ENCODE measurements at regions of chr11 and their contacts with region 1.

Region 1: DNA sequence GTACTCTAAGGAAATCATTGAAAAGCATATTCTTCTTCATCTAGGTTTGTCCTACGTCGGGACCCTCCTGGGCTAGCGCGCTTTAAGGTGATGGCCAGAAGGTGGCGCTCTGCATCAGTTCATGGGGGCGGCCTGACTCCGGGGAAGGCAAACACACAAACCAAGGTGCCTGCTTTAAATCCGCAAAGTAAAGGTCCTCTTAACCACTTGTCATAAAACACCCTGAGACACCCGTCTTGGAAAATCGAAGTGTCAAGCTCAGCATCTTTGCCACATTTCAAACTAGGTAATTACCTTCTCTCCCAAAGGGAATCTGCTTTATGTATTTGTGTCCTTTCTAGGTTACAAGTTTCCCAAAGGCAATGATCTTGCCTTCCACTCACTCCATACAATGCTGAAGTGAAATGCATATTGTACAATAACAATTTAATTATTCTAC is 33.9 kb downstream of the LMO2 start:
- DNase-seq: peak; percentile 32
- ATAC-seq: peak; percentile 99
- H3K4me3 ChIP-seq: no peak overlapping the region
- H3K27ac ChIP-seq: no peak overlapping the region
- H3K4me1 ChIP-seq: no peaks in the 10 kb centered on the region
- H3K27me3 ChIP-seq: peaks cover 0 to 2% of the 10 kb centered on the region in 2 experiments; a peak in 1 of 4 replicates
- CTCF ChIP-seq: peak; percentile 85 to 94 (median 88); a peak in 5 of 6 replicates
- EP300 ChIP-seq: no peak
- POLR2A ChIP-seq: no peak
- RAD21 ChIP-seq: peak; percentile 100

Region 2: GRCh38 chr11:33722579-33723225 is 135.2 kb before region 1 on chr11:
- CTCF ChIA-PET with region 1: no interaction called
- POLR2A ChIA-PET with region 1: no interaction called
- RAD21 ChIA-PET with region 1: no interaction called
- SMC1A ChIA-PET with region 1: no interaction called
- in situ Hi-C with region 1: no loop called
- intact Hi-C with region 1: no loop called
- DNase-seq: peak; percentile 34
- ATAC-seq: peak; percentile 90
- H3K4me3 ChIP-seq: no peak overlapping the region
- H3K27ac ChIP-seq: peak overlapping the region; percentile 62
- H3K4me1 ChIP-seq: peaks cover 24% of the 10 kb centered on the region
- H3K27me3 ChIP-seq: no peaks in the 10 kb centered on the region
- CTCF ChIP-seq: no peak
- EP300 ChIP-seq: no peak
- POLR2A ChIP-seq: no peak; the same call in 1 of the 2 replicates
- RAD21 ChIP-seq: no peak

Region 3: DNA sequence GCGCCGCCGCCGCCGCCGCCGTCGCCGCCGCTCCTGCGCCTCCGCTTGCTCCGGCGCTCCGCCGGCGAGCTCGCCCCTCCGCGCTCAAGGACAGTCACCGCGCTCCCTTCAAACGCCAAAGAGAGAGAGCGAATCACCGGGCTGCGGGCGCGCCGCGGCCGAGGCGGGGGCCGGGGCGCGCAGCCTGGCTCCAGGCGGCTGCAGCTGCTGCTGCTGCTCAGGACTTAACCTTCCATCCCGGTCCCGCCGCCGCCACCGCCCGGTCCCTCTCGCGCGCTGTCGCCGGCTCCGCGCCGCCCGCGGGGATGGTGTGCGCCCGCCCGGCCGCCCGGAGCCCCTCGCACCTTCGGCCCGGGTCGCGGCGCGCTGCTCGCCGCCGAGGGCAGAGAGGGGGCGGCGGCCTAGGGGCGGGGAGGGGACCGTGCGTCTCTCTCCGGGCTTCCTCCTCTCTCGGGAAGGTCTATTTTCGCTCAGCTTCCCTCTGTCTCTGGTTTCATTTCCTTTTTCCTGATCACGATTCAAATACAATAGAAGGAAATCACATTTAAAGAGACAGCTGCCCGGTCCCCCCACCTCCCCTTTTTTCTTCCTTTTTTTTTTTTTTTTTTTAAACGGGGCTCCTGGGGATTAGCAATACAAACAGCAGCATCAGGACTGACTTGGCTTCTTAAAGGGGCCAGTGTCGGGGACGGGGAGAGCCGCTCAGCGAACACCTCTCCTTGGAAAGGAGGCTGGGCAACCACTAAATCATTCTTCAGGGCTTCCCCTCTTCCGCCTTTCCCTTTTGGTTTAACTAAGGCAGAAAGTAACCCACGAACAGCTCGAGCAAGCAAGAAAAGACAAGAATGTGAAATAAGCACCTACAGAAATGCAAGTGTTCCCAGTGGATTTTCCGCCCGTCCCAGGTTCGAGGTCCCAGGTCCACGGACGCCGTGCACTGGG is 11.8 kb after region 1 on chr11:
- CTCF ChIA-PET with region 1: interaction called, 20 read pairs
- POLR2A ChIA-PET with region 1: no interaction called
- RAD21 ChIA-PET with region 1: no interaction called
- SMC1A ChIA-PET with region 1: interaction called, 7 read pairs
- in situ Hi-C with region 1: no loop called
- intact Hi-C with region 1: no loop called
- DNase-seq: no peak
- ATAC-seq: peak; percentile 61
- H3K4me3 ChIP-seq: peak overlapping the region; percentile 75
- H3K27ac ChIP-seq: no peak overlapping the region
- H3K4me1 ChIP-seq: peaks cover 4% of the 10 kb centered on the region
- H3K27me3 ChIP-seq: peaks cover 4 to 8% of the 10 kb centered on the region in 2 experiments
- CTCF ChIP-seq: no peak
- EP300 ChIP-seq: no peak
- POLR2A ChIP-seq: no peak
- RAD21 ChIP-seq: no peak

Region 4: DNA sequence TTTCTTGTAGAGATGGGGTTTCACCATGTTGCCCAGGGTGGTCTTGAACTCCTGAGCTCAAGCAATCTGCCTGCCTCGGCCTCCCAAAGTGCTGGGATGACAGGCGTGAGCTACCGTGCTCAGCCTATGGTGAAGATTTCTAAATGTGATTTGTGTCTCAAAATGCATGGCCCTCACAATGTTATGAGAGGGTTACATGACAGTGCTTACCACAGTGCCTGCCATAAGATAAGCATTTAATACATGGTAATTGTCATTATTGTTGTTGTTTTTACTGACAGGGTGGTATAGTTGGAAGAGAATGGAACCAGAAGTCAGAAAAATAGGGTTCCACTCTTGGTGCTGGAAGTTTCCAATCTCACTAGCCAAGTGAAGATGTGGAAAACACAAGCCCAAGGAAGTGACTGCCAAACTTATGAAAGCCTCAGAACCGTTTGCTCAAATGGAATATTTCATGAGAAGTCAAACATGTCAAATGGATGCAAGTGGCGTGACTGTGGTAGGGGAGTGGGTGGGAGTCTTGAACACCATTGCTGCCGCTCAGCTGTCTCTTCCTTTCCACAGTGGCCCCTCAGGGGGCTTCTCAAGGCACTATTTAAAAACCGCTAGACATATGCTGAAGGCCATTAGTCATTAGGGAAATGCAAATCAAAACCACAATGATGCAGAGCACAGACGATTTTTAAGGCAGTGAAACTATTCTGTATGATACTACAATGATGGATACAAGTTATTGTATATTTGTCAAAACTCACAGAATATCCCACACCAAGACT is 63.1 kb after region 1 on chr11:
- CTCF ChIA-PET with region 1: no interaction called
- POLR2A ChIA-PET with region 1: no interaction called
- RAD21 ChIA-PET with region 1: no interaction called
- SMC1A ChIA-PET with region 1: interaction called, 7 read pairs
- in situ Hi-C with region 1: no loop called
- intact Hi-C with region 1: loop called (anchors 5 kb)
- DNase-seq: peak; percentile 69
- ATAC-seq: peak; percentile 97
- H3K4me3 ChIP-seq: no peak overlapping the region
- H3K27ac ChIP-seq: peak overlapping the region; percentile 70
- H3K4me1 ChIP-seq: peaks cover 18% of the 10 kb centered on the region
- H3K27me3 ChIP-seq: no peaks in the 10 kb centered on the region
- CTCF ChIP-seq: no peak
- EP300 ChIP-seq: peak; percentile 90 to 96
- POLR2A ChIP-seq: no peak
- RAD21 ChIP-seq: peak; percentile 22; the same call in 1 of the 2 replicates

Region 5: GRCh38 chr11:33976495-33977199 is 118.7 kb after region 1 on chr11:
- CTCF ChIA-PET with region 1: interaction called, 187 read pairs
- POLR2A ChIA-PET with region 1: no interaction called
- RAD21 ChIA-PET with region 1: interaction called, 14 read pairs
- SMC1A ChIA-PET with region 1: interaction called, 45 read pairs
- in situ Hi-C with region 1: loop called (anchors 5 kb)
- intact Hi-C with region 1: loop called (anchors 1 kb)
- DNase-seq: no peak
- ATAC-seq: no peak
- H3K4me3 ChIP-seq: no peak overlapping the region
- H3K27ac ChIP-seq: no peak overlapping the region
- H3K4me1 ChIP-seq: no peaks in the 10 kb centered on the region
- H3K27me3 ChIP-seq: no peaks in the 10 kb centered on the region; a peak in 2 of 4 replicates
- CTCF ChIP-seq: no peak
- EP300 ChIP-seq: no peak
- POLR2A ChIP-seq: no peak
- RAD21 ChIP-seq: no peak